Posterior cingulate gyrus (tissue), 11 donors: ENCODE measurements at regions of chr12 and their contacts with region 1.

Region 1: DNA sequence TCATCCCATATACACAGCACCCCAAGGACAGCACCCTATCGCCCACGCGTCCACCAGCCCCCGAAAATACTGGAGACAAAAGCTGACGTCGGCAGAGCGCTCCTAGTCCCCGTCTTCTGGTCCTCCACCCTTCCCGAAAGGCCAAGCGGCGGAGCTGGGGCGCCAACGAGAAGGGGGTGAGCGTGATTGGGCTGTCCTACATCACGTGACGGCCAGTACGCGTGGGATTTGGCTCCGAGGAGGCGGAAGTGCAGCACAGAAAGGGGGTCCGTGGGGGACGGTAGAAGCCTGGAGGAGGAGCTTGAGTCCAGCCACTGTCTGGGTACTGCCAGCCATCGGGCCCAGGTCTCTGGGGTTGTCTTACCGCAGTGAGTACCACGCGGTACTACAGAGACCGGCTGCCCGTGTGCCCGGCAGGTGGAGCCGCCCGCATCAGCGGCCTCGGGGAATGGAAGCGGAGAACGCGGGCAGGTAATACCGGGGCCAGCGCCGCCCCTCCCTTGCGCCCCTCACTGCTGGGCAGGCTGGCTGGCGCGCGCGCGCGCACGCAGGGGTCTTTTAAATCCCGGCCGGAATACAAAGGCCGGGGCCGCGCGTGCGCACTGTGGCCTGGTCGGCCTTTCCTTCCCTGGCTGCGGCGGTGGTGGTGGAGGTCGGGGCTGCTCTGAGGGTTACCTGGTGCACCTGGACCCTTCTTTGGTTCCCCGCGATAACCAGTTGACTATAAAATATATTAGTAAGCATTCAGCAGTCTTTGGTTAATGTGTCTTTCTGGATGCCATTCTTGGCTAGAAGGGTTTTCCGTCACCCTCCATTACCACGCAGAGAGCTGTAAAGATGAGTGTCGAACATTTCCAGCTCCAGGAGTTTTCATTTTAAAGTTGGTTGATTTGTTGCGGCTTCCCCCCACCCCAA is at the start of gene TDG:
- DNase-seq: peak; percentile 97 to 100 (median 98)

Region 2: GRCh38 chr12:103930034-103930786 is 35.6 kb before region 1 on chr12 and contains the start of gene HSP90B1:
- intact Hi-C with region 1: loop called (anchors 2 kb)
- DNase-seq: peak; percentile 98 to 100 (median 99)

Region 3: GRCh38 chr12:104064031-104064822 is 98.4 kb after region 1 on chr12 and contains the start of gene HCFC2:
- intact Hi-C with region 1: loop called (anchors 2 kb)
- DNase-seq: peak; percentile 88 to 99 (median 92)

Region 4: DNA sequence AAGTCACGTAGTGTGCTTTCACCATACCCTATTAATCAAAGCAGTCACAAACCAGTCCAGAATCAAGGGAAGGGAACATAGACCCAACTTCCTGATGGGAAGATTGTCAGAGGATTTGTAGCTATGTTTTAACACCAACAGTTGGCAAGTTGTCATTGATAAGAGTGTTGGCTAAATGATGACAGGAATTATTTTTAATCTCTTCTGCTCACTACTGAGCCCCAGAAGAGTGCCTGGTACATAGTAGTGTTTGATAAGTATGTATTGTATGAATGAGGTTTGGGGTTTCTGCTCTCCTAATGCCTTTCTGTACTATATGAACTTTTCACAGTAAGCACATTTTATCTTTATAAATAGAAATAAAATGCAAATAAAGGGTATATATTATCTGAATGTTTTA is 113.2 kb after region 1 on chr12:
- intact Hi-C with region 1: no loop called
- DNase-seq: no peak

Region 5: GRCh38 chr12:104137913-104138796 is 172.3 kb after region 1 on chr12 and contains the start of gene NFYB:
- intact Hi-C with region 1: loop called (anchors 10 kb)
- DNase-seq: peak; percentile 89 to 99 (median 94)